Panc1 (cell line): ENCODE measurements at regions of chr2 and their contacts with region 1.

Region 1: DNA sequence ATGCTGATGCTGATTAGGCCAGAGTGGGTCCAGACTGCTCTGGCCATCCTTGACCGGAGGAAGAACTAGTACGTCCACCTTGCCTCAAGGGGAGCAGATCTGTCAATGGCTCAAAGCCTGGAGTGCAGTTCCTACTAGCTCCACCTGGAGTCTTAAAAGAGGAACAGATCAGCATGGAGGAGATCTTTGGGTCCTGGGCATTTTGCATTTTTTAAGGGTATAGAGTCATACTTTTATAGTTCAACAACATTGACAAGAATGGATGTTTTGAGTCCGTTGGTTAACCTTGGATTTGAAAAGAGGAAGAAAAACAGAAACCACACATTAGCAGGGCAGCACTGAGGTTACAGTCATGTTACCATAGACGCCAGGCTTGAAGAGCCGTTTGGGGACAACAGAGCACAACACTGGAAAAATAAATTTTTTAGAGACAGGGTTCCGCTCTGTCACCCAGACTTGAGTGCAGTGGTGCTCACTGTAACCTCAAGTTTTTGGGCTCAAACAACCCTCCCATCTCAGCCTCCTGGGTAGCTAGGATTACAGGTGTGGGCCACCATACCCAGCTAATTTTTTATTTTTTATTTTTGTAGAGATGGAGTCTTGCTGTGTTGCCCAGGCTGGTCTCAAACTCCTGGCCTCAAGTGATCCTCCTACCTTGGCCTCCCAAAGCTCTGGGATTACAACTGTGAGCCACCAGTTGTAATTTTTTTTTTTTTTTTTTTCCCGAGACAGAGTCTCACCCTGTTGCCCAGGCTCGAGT is 78.5 kb downstream of the PRKCE start:
- DNase-seq: no peak
- ATAC-seq: peak; percentile 78
- H3K4me3 ChIP-seq: no peak overlapping the region
- H3K27ac ChIP-seq: no peak overlapping the region
- H3K4me1 ChIP-seq: no peaks in the 10 kb centered on the region
- H3K27me3 ChIP-seq: no peaks in the 10 kb centered on the region
- CTCF ChIP-seq: peak; percentile 50

Region 2: DNA sequence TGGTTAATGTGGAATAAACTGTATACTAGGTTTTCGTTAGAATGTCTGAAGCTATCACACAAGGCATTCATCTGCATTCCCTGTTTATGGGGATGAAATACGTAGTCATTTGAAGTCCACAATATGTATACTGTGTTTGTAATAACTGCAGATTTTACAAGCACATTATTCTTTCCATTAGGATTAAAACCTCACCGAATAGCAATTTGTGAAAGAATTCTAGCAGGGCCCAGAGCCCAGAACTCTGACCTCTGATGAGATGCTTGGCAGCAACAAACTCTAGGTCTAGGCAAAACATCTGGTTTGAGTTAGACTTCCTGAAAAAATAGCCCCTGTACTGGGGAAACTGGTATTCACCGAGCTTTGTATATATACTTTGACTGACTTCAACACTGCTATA is 277.1 kb before region 1 on chr2:
- CTCF ChIA-PET with region 1: interaction called, 14 read pairs
- POLR2A ChIA-PET with region 1: no interaction called
- in situ Hi-C with region 1: no loop called
- intact Hi-C with region 1: no loop called
- DNase-seq: no peak
- ATAC-seq: no peak
- H3K4me3 ChIP-seq: no peak overlapping the region
- H3K27ac ChIP-seq: no peak overlapping the region
- H3K4me1 ChIP-seq: no peaks in the 10 kb centered on the region
- H3K27me3 ChIP-seq: no peaks in the 10 kb centered on the region
- CTCF ChIP-seq: no peak

Region 3: GRCh38 chr2:45743531-45744396 is 13.8 kb after region 1 on chr2:
- CTCF ChIA-PET with region 1: no interaction called
- POLR2A ChIA-PET with region 1: no interaction called
- in situ Hi-C with region 1: no loop called
- intact Hi-C with region 1: no loop called
- DNase-seq: no peak
- ATAC-seq: no peak
- H3K4me3 ChIP-seq: no peak overlapping the region
- H3K27ac ChIP-seq: no peak overlapping the region
- H3K4me1 ChIP-seq: no peaks in the 10 kb centered on the region
- H3K27me3 ChIP-seq: no peaks in the 10 kb centered on the region
- CTCF ChIP-seq: no peak